ENCODE measurements at regions of chr1 and their contacts with region 1.

Region 1: GRCh38 chr1:88061492-88062177 is 622.4 kb upstream of the PKN2 start:
- DNase-seq: peak; percentile 91
- H3K4me3 ChIP-seq: no peak overlapping the region
- H3K27ac ChIP-seq: no peak overlapping the region
- H3K4me1 ChIP-seq: peaks cover 22% of the 10 kb centered on the region
- H3K27me3 ChIP-seq: no peaks in the 10 kb centered on the region
- CTCF ChIP-seq: peak; percentile 96

Region 2: GRCh38 chr1:87131809-87132283 is 929.8 kb before region 1 on chr1:
- CTCF ChIA-PET with region 1: no interaction called
- POLR2A ChIA-PET with region 1: no interaction called
- intact Hi-C with region 1: loop called (anchors 5 kb)
- DNase-seq: peak; percentile 82
- H3K4me3 ChIP-seq: peak overlapping the region; percentile 36
- H3K27ac ChIP-seq: peak overlapping the region; percentile 36
- H3K4me1 ChIP-seq: no peaks in the 10 kb centered on the region
- H3K27me3 ChIP-seq: no peaks in the 10 kb centered on the region
- CTCF ChIP-seq: peak; percentile 97

Region 3: DNA sequence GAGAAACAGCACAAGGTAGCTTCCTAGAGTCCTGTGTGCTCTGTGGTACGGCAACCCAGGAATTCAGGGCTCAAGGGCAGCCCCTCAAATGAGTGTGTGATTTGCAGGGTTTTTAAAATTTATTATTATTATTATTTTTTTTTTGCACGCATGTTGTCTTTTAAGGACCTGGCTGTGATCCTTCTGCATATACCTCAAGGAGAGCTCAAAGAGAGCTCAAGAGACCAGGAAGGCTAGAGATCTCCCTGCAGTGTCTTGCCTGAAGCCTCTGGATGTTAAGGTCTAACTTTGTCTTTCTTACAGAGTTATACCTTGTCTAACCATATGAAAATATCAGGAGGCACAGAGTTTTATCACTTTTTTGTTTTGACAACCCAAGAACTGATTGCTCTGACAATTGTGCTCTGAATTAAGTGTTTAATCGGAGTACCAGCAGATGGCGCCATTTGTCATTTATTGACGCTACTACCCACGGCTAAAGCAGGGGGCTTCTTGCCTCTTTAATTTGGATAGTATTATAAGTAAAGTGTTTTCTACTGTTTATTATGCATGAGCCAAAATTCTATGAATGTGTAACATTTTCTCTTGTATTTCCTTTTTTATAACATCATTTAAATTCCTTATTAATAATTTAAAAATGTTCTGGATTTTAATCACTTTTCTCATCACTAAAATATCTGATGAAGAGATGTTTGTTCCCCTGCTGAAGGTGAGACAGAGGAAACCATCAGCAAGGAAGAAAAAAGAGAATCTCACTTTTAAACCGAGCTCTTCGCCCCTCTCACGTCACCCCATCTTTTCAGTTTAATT is 768.7 kb before region 1 on chr1:
- CTCF ChIA-PET with region 1: interaction called, 3 read pairs
- POLR2A ChIA-PET with region 1: no interaction called
- intact Hi-C with region 1: loop called (anchors 5 kb)
- DNase-seq: peak; percentile 79
- H3K4me3 ChIP-seq: no peak overlapping the region
- H3K27ac ChIP-seq: no peak overlapping the region
- H3K4me1 ChIP-seq: peaks cover 7% of the 10 kb centered on the region
- H3K27me3 ChIP-seq: no peaks in the 10 kb centered on the region
- CTCF ChIP-seq: peak; percentile 83

Region 4: DNA sequence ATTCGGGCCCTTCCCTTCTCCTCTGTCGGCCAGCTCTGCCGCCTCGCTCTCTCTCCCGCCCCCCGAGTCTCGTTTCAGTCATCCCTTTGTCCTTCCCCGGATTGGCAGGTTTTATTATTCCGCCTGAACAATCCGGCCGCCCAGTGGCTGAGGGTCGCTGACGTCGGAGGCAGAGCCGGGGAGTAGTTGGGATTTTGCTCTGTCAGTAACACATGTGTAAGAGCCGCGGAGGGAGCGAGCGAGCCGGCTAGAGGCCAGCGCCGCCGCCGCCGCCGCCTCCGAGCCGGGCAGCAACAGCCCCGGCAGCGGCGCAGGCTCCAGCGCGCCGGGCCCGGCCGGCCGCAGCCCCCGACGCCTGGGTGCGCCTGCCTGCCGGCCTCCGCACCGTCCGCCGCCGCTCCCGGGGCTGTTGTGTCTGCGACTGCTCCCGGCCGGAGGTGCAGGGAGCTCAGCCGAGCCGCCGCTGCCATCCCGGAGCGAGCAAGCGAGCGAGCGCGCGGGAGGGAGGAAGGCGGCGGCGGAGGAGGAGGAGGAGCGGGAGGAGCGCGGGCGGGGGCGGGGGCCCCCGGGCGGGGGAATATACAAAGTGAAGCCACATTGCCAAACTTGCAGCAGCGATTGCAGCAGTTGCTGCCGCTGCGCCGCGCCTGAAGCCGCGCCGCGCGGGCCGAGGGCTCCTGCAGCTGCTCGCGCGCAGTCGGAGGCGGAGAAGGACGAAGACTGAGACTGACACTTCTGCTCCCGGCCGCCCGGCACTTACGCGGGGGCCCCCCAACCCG is 733.2 kb before region 1 on chr1 and contains the start of gene LMO4:
- CTCF ChIA-PET with region 1: interaction called, 5 read pairs
- POLR2A ChIA-PET with region 1: no interaction called
- intact Hi-C with region 1: loop called (anchors 10 kb)
- DNase-seq: peak; percentile 99
- H3K4me3 ChIP-seq: peak within 1 kb of the TSS; percentile 86
- H3K27ac ChIP-seq: peak within 1 kb of the TSS; percentile 96
- H3K4me1 ChIP-seq: peaks cover 21% of the 10 kb centered on the region
- H3K27me3 ChIP-seq: no peaks in the 10 kb centered on the region
- CTCF ChIP-seq: no peak
- total RNA-seq, gene LMO4: 32.2 and 35.3 TPM in 2 replicates

Region 5: DNA sequence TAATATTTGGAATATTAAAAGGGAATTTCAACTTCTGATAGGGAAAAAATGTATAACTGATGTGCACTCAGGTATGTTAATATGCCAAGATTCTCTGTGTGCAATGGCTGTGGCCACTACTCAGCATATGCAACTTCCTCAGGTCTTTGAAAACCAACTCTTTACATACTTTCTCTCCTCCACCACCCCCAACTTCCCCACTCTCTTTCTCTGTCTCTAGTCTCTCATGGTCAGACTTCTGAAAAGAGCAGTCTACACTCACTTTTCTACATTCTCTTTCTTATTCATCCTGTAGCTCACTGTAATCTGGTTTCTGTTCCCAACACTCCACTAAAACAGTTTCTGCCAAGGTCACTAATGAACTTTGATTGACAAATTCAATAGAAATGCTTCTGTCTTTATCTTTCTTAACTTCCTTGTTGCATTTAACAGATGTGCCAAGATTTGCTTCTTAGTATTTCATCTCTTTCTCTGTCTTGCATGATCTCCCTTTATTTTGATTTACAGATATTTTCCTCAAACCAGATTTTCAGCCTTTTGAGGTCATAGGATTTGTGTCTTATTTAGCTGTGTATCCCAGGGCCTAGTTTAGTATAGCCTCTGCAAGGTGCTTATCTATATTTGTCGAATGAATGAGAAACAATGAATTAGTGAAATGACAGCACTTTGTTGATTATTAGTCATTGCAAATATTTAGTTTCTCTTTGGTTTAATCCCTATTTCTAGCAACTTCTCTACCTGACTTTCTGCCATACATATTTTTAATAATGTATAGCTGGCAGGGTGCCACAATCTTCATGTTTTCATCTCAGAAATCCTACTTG is 564.0 kb before region 1 on chr1:
- CTCF ChIA-PET with region 1: interaction called, 9 read pairs
- POLR2A ChIA-PET with region 1: no interaction called
- intact Hi-C with region 1: loop called (anchors 5 kb)
- DNase-seq: no peak
- H3K4me3 ChIP-seq: no peak overlapping the region
- H3K27ac ChIP-seq: no peak overlapping the region
- H3K4me1 ChIP-seq: no peaks in the 10 kb centered on the region
- H3K27me3 ChIP-seq: no peaks in the 10 kb centered on the region
- CTCF ChIP-seq: no peak

Region 6: DNA sequence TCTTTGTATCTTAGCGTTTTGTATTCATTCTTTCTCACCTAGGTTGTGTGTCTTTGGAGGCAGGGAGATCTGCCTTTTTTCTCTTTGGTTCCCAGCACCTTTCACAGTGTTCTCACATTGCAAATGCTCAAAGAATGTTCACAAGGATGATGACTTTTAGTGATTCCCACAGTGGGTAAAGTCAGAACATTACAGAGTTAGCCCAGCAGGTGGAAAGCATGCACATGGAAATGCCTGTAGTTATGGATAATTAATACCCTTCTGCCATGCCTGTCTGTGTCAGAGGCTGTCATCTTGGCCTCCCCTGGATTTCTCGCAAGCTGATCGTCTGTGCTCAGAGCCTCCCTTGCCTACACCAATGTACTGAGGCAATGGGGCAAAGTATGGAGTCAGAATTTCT is 274.1 kb before region 1 on chr1:
- CTCF ChIA-PET with region 1: no interaction called
- POLR2A ChIA-PET with region 1: no interaction called
- intact Hi-C with region 1: loop called (anchors 10 kb)
- DNase-seq: peak; percentile 33
- H3K4me3 ChIP-seq: no peak overlapping the region
- H3K27ac ChIP-seq: no peak overlapping the region
- H3K4me1 ChIP-seq: no peaks in the 10 kb centered on the region
- H3K27me3 ChIP-seq: no peaks in the 10 kb centered on the region
- CTCF ChIP-seq: peak; percentile 30; the same call in 1 of the 2 replicates

Region 7: DNA sequence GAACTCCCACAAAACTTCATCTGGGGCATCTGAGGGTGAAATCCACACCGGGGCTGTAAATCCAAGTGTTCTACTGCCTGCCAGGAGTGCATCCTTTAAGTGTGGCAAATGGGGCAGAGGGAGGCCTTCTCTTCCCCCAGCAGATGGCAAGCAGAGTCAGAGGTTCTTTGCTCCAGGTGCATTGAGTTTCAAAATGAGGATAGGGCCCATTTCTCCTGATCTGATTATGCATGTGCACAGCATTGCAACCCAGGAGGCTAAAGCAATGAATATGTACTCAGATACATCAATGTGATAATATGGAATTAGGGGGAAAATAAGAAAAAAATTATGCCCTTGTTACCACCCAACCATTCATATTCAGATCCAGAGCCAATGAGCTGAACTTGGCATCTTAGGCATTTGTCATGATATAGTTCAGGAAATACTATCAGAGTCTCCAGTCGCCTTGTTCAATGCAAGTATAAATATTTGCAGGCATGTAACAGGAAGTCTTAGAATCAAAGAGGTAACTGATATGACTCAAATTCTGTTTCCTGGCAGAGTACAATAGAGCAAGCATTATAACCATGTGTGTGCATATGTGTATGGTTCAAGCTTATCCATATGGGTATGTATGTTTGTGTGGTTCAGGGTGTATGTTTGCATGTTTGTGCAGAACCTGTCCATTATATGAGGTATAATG is 148.6 kb after region 1 on chr1:
- CTCF ChIA-PET with region 1: no interaction called
- POLR2A ChIA-PET with region 1: no interaction called
- intact Hi-C with region 1: no loop called
- DNase-seq: no peak
- H3K4me3 ChIP-seq: no peak overlapping the region
- H3K27ac ChIP-seq: no peak overlapping the region
- H3K4me1 ChIP-seq: no peaks in the 10 kb centered on the region
- H3K27me3 ChIP-seq: no peaks in the 10 kb centered on the region
- CTCF ChIP-seq: no peak

Region 8: DNA sequence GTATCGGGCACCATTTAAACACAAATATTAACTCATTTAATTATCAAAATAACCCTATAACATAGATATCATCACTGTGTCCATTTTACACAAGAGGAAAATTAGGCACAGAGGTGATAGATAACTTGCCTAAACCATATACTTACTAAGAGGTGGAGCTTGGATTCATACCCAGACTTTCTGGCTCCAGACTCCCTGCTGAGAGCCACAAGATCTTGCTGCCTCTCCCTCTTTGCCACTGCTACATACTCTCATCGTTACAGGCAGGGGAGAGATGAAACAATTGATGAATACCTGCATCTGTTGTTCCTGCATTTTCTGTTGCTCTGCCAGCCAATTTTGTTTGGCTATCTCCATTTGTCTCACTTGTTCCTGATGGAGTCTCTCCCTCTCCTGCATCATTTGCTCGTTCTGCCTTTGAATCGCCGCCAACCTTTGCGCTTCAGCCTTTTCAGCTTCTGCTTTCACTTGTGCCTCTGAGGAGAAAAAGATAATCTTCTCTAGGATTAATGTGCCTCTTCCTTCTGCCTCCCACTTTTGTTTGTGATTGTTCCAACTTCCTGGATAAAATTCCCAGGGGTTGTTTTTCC is 1200.4 kb after region 1 on chr1:
- CTCF ChIA-PET with region 1: no interaction called
- POLR2A ChIA-PET with region 1: interaction called, 13 read pairs
- intact Hi-C with region 1: no loop called
- DNase-seq: peak; percentile 61
- H3K4me3 ChIP-seq: no peak overlapping the region
- H3K27ac ChIP-seq: no peak overlapping the region
- H3K4me1 ChIP-seq: peaks cover 19% of the 10 kb centered on the region
- H3K27me3 ChIP-seq: no peaks in the 10 kb centered on the region
- CTCF ChIP-seq: no peak

Measured in A673 (cell line).